ENCODE measurements at regions of chr2 and their contacts with region 1.

Region 1: GRCh38 chr2:201363857-201364560 is 6.9 kb upstream of the FLACC1 start:
- DNase-seq: no peak
- H3K4me3 ChIP-seq: no peak overlapping the region
- H3K27ac ChIP-seq: peak overlapping the region in 2 of 4 donors; percentile 49 to 50
- H3K4me1 ChIP-seq: peaks cover 0 to 5% (median 0%) of the 10 kb centered on the region in 3 donors
- H3K27me3 ChIP-seq: no peaks in the 10 kb centered on the region
- CTCF ChIP-seq: peak; percentile 64 to 93 (median 80)
- POLR2A ChIP-seq: no peak

Region 2: DNA sequence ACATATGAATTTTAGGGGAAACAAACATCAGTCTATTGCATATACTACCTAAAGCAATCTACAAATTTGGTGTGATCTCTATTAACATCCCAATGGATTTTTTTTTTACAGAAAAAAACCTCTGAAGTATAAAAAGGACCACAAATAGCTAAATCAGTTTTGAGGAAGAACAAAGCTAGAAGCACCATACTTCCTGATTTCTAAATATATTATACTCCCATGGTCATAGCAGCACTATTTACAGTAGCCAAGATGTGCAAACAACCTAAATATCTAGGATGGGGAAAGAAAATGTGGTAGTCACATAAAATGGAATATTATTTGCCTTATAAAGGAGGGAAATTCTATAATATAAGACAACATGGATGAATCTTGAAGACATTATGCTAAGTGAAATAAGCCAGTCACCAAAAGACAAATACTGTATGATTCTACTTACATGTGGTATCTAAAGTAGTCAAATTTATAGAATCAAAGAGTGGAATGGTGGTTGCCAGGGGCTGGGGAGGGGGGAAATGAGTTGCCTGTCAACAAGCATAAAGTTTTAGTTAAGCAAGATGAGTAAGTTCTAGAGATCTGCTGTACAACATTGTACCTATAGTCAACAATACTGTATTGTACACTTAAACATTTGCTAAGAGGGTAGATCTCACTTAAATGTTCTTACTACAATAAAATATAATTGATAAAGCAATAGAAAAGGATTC is 121.3 kb before region 1 on chr2:
- intact Hi-C with region 1: loop called (anchors 10 kb)
- DNase-seq: no peak
- H3K4me3 ChIP-seq: no peak overlapping the region
- H3K27ac ChIP-seq: no peak overlapping the region
- H3K4me1 ChIP-seq: peaks cover 0 to 5% (median 0%) of the 10 kb centered on the region in 3 donors
- H3K27me3 ChIP-seq: no peaks in the 10 kb centered on the region
- CTCF ChIP-seq: no peak
- POLR2A ChIP-seq: no peak

Region 3: GRCh38 chr2:201500534-201500933 is 136.5 kb after region 1 on chr2:
- intact Hi-C with region 1: no loop called
- DNase-seq: no peak
- H3K4me3 ChIP-seq: no peak overlapping the region
- H3K27ac ChIP-seq: no peak overlapping the region
- H3K4me1 ChIP-seq: no peaks in the 10 kb centered on the region
- H3K27me3 ChIP-seq: no peaks in the 10 kb centered on the region
- CTCF ChIP-seq: no peak
- POLR2A ChIP-seq: no peak

Measured in esophagus squamous epithelium (tissue), 5 donors.